ENCODE measurements at regions of chr4 and their contacts with region 1.

Region 1: GRCh38 chr4:140105436-140105835 is 48.5 kb downstream of the MAML3 start:
- DNase-seq: no peak
- H3K4me3 ChIP-seq: no peak overlapping the region
- H3K27ac ChIP-seq: no peak overlapping the region
- H3K4me1 ChIP-seq: peaks cover 20% of the 10 kb centered on the region
- H3K27me3 ChIP-seq: no peaks in the 10 kb centered on the region
- CTCF ChIP-seq: no peak

Region 2: GRCh38 chr4:139872274-139872673 is 233.2 kb before region 1 on chr4:
- CTCF ChIA-PET with region 1: interaction called, 16 read pairs
- dilution Hi-C with region 1: no loop called
- in situ Hi-C with region 1: no loop called
- intact Hi-C with region 1: no loop called
- DNase-seq: peak; percentile 94
- H3K4me3 ChIP-seq: no peak overlapping the region
- H3K27ac ChIP-seq: peak overlapping the region; percentile 66
- H3K4me1 ChIP-seq: peaks cover 18% of the 10 kb centered on the region
- H3K27me3 ChIP-seq: no peaks in the 10 kb centered on the region
- CTCF ChIP-seq: no peak